ENCODE measurements at regions of chr1 and their contacts with region 1.

Region 1: DNA sequence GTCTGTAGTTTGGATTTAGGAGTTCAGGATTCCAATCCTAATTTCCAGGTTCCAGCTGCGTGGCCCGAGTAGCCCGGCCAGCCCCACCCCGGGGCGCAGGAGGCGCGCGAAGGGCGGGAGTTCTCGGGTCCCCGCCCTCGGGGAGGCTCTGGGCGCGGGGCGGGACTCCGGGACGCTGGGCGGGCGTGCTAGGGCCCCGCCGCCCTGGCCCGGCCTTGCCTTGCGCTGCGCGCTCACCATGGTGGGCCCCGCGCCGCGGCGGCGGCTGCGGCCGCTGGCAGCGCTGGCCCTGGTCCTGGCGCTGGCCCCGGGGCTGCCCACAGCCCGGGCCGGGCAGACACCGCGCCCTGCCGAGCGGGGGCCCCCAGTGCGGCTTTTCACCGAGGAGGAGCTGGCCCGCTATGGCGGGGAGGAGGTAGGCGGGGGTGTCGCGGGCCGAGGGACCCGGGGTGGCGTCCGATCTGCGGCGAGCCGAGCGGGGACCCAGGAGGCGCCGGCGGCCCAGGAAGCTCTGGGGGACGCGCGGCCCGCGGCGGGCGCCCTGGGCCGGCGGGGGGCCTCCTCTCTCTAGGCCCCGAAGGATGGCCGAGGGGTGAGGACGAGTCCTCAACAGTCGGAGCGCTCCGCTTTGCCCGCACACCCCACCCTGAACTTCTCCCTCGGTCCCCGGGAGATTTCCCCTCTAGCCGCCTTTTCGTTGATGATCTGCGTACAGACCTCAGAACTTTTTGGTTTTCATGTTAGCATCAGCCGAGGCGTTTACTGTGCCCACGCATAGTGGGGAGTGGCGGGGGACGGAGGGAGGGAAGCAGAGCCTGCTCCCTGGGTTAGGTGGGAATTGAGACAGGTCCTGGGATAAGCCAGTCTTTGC is at the start of gene NENF:
- DNase-seq: peak; percentile 74
- H3K4me3 Mint-ChIP-seq: peak within 1 kb of the TSS; percentile 76
- H3K27ac Mint-ChIP-seq: no peak within 1 kb of the TSS
- H3K4me1 Mint-ChIP-seq: peaks cover 37% of the 10 kb centered on the region
- H3K27me3 Mint-ChIP-seq: no peaks in the 10 kb centered on the region
- total RNA-seq, gene NENF: 27.0 to 30.9 TPM

Region 2: GRCh38 chr1:211675230-211676105 is 757.5 kb before region 1 on chr1 and contains the start of gene NEK2:
- CTCF ChIA-PET with region 1: no interaction called
- intact Hi-C with region 1: loop called (anchors 5 kb)
- DNase-seq: peak; percentile 97
- H3K4me3 Mint-ChIP-seq: peak within 1 kb of the TSS; percentile 86
- H3K27ac Mint-ChIP-seq: peak within 1 kb of the TSS; percentile 76
- H3K4me1 Mint-ChIP-seq: peaks cover 7% of the 10 kb centered on the region
- H3K27me3 Mint-ChIP-seq: no peaks in the 10 kb centered on the region
- total RNA-seq, gene NEK2: 60.8 to 62.3 TPM

Region 3: DNA sequence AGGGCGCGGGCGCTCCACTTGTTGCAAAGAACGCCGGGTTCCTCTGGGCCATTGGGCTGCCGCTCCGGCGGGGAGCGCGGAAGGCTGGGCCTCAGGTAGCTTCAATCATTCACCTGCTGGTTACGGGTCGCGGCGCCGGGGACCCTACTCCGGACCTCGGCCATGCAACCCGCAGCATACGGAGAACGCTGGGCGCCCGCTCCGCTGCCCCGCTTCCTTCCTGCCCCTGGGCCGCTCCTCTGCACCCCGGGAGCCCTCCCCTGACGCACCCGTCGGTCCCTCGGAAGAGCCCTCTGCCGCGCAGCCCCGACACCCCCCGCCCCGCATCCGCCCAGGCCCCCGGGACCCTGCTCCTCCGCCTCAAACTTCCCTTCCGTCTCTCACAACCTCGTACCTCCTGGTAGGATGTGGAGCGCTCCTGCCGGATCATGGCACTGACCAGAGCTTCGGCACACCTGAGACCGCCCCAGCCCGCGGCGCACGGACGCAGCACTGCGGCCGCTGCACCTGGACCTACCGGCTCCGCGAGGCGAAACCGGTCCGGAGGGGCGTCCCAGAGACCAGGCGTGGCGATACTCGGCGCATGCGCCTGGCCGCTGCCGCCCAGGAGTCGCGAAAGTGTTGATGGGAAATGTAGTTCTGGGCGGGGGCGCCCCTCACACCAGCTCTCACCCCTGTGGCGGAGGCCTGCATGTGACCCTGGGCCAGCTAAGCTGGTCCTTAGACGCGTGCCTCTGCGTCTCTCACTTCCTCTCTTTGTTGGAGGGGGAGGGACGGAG is 18.4 kb before region 1 on chr1 and contains the start of gene PACC1:
- CTCF ChIA-PET with region 1: no interaction called
- intact Hi-C with region 1: loop called (anchors 1 kb)
- DNase-seq: peak; percentile 88
- H3K4me3 Mint-ChIP-seq: peak within 1 kb of the TSS; percentile 95
- H3K27ac Mint-ChIP-seq: peak within 1 kb of the TSS; percentile 72
- H3K4me1 Mint-ChIP-seq: peaks cover 23% of the 10 kb centered on the region
- H3K27me3 Mint-ChIP-seq: no peaks in the 10 kb centered on the region
- total RNA-seq, gene PACC1: 9.5 to 10.2 TPM

Measured in activated naive CD4-positive, alpha-beta T cell treated with anti-CD3 and anti-CD28 coated beads for 36 hours (primary cell).